PC-3 (cell line): ENCODE measurements at regions of chr4 and their contacts with region 1.

Region 1: GRCh38 chr4:73729534-73730165 is 10.7 kb upstream of the CXCL8 start:
- DNase-seq: peak; percentile 93
- ATAC-seq: peak; percentile 68
- H3K4me3 ChIP-seq: no peak overlapping the region
- H3K27ac ChIP-seq: peak overlapping the region; percentile 97
- H3K4me1 ChIP-seq: peaks cover 79% of the 10 kb centered on the region
- H3K27me3 ChIP-seq: no peaks in the 10 kb centered on the region
- CTCF ChIP-seq: peak; percentile 96

Region 2: GRCh38 chr4:73589261-73589847 is 140.3 kb before region 1 on chr4:
- CTCF ChIA-PET with region 1: no interaction called
- POLR2A ChIA-PET with region 1: no interaction called
- intact Hi-C with region 1: no loop called
- DNase-seq: peak; percentile 52
- ATAC-seq: peak; percentile 72
- H3K4me3 ChIP-seq: no peak overlapping the region
- H3K27ac ChIP-seq: no peak overlapping the region
- H3K4me1 ChIP-seq: peaks cover 28% of the 10 kb centered on the region
- H3K27me3 ChIP-seq: no peaks in the 10 kb centered on the region
- CTCF ChIP-seq: no peak

Region 3: DNA sequence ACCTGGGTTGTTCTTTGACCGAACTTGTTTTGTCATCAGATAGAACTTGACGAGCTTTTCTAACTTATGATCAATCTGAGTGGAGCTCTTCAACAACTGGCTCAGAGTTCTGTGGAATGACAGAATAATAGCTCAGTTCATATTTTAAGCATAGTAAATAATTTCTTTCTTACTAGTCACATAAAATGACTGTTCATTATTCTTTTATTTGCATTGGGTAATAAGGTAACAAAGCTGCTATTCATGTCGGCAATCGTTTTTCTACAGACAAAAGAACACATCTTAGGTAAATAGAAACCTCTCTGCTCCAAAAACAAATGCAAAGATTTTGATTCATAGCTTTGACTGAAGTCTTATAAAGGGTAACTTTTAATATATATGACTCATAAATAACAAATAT is 46.6 kb before region 1 on chr4:
- CTCF ChIA-PET with region 1: interaction called, 7 read pairs
- POLR2A ChIA-PET with region 1: interaction called, 8 read pairs
- intact Hi-C with region 1: loop called (anchors 1 kb)
- DNase-seq: peak; percentile 98
- ATAC-seq: peak; percentile 75
- H3K4me3 ChIP-seq: no peak overlapping the region
- H3K27ac ChIP-seq: peak overlapping the region; percentile 96
- H3K4me1 ChIP-seq: peaks cover 71% of the 10 kb centered on the region
- H3K27me3 ChIP-seq: no peaks in the 10 kb centered on the region
- CTCF ChIP-seq: no peak

Region 4: DNA sequence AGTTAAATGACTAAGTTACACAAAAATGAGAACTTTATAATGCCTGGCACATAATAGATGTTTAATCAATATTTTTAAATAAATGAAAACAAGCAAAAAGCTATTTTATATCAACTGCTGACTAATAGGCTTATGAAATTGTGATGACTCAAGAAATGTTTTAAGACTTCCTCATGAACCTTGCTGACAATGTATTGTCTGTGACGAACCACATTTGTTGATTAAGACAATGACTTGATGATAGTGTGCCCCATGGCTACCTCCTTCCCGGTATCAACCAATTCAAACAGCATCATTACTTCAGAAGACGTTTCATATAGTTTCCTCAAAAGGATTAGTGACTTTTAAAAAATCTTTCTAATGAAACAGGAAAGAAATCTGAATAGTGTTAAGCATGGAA is 114.7 kb after region 1 on chr4:
- CTCF ChIA-PET with region 1: interaction called, 3 read pairs
- POLR2A ChIA-PET with region 1: no interaction called
- intact Hi-C with region 1: loop called (anchors 5 kb)
- DNase-seq: peak; percentile 95
- ATAC-seq: peak; percentile 82
- H3K4me3 ChIP-seq: peak overlapping the region; percentile 24
- H3K27ac ChIP-seq: peak overlapping the region; percentile 85
- H3K4me1 ChIP-seq: peaks cover 53% of the 10 kb centered on the region
- H3K27me3 ChIP-seq: no peaks in the 10 kb centered on the region
- CTCF ChIP-seq: no peak

Region 5: DNA sequence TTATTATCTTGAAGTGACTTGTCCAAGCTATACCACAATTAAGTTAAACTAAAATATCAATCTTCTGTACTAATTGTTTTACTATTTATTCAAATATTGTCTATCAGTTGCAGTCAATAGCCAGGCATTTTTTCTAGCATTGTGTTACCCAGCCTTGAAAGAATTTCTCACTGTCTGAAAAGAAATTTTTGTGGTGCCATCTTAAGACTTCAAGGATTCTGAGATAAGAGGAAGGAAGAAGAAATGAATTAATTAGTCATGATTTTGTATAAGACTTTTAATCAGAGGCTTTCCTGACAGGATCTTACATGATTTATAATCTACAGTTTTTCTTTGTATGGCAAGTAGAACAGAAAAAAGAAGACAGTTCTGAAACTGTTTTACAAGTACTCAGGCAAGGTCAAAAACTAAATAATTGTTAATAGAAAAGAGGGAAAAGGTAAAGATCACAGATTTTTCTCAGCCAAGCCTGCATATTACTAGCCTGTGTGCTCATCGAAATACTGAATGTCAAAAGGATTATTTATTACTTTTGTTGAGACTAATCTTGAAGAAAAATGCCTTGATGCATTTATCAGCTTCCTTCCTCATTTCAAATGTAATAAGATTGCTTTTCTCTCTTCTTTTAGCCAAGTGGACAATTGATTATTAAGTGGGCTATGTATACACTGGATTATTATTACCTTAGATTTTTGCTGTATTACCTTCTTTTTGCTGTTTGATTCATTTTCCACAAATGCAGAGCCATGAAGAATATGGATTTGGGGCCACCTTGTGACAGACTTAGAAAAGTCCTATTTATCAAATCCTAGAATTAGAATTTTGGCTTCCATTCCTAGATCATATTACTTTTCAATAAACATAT is 193.3 kb after region 1 on chr4:
- CTCF ChIA-PET with region 1: no interaction called
- POLR2A ChIA-PET with region 1: no interaction called
- intact Hi-C with region 1: loop called (anchors 1 kb)
- DNase-seq: peak; percentile 83
- ATAC-seq: peak; percentile 70
- H3K4me3 ChIP-seq: no peak overlapping the region
- H3K27ac ChIP-seq: peak overlapping the region; percentile 59
- H3K4me1 ChIP-seq: peaks cover 26% of the 10 kb centered on the region
- H3K27me3 ChIP-seq: no peaks in the 10 kb centered on the region
- CTCF ChIP-seq: peak; percentile 91

Region 6: GRCh38 chr4:74109116-74109869 is 379.6 kb after region 1 on chr4:
- CTCF ChIA-PET with region 1: no interaction called
- POLR2A ChIA-PET with region 1: no interaction called
- intact Hi-C with region 1: loop called (anchors 10 kb)
- DNase-seq: peak; percentile 99
- ATAC-seq: peak; percentile 79
- H3K4me3 ChIP-seq: peak overlapping the region; percentile 45
- H3K27ac ChIP-seq: peak overlapping the region; percentile 96
- H3K4me1 ChIP-seq: peaks cover 65% of the 10 kb centered on the region
- H3K27me3 ChIP-seq: no peaks in the 10 kb centered on the region
- CTCF ChIP-seq: no peak